Breast epithelium (tissue), 4 donors: ENCODE measurements at regions of chr14 and their contacts with region 1.

Region 1: DNA sequence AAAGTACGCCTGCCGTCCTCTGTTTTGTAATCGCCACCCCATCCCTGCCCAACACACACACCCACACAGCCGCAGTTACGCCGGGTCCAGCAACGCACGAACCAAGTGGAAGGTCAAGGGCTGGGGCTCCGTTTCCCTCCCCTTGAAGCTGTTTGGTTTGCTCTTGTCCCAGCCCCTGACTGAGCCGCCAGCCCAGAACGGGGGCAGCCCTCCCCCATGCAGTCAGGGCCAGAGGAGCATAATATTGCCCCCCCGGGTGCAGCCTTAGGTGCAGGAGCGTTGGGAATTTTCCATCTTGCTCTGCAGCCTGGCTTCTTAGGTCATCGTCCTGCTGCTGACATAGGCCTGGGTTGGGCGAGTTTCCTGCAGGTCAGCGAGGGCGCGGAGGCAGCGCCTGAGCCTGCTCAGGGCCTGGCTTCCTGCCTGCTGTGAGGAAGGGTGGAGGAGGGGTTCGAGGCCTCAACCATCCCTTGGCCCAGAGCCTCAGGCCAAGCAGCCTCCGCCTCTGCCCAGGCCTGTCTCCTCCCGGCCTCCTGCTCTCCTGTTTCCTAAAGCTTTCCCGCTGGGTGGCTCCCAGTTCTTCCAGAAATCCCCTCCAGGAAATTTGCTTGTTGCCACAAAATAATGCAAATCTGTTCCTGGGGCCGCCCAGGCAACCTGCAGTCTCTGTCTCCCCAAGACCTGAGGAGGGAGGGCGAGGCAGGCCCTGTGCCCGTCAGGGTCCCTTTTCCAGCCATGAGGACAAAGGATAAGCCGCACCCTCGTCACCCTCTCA is 44.5 kb downstream of the PSMA6 start:
- DNase-seq: peak; percentile 89 to 91
- H3K4me3 ChIP-seq: peak overlapping the region in 2 of 3 donors; percentile 25 to 30
- H3K27ac ChIP-seq: peak overlapping the region; percentile 87 to 89
- H3K4me1 ChIP-seq: peaks cover 17 to 43% of the 10 kb centered on the region in 2 donors
- H3K27me3 ChIP-seq: no peaks in the 10 kb centered on the region
- CTCF ChIP-seq: no peak
- POLR2A ChIP-seq: no peak

Region 2: DNA sequence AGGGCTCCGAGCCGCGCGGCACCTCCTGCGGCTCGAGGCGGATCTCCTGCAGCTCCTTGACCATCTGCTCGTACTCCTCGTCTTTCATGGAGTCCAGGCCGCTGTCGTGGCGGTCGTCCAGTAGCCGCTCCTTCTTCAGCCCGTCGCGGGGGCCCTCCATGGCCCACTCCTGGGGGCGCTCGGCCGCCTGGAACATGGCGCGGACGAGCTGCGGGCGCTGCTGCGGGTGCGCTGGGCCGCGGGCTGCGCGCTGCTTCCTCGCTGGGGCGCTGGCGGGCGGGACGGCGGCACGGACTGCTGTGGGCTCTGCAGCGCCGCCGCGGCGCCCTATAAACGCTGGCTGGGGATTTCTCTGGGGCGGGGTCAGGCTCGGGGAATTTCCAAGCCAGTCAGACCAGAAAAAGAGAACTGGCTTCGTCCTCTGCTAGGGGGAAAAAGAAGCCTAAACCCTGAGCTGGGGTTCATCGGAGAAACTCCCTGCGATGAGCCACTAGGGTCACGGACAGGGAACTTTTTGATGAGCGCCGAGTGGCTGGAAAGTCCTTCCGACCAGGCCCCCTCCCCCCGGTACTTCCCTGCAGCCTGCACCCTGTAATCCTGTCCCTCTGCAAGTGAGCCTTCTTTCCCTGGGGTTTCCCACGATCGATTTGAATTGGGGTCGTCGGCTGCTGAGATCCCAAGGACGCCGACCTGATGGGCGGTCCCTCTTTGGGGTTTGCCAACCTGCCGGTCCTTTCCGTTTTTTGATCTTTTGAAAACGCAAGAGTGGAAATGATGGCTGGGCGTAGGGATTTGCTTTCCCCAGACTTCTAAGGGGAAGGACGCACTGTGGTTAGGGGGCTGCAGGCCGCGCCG is 68.0 kb after region 1 on chr14 and contains the start of gene NFKBIA:
- intact Hi-C with region 1: loop called (anchors 5 kb)
- DNase-seq: peak; percentile 83 to 93
- H3K4me3 ChIP-seq: peak within 1 kb of the TSS; percentile 69 to 99 (median 84)
- H3K27ac ChIP-seq: peak within 1 kb of the TSS; percentile 97 to 99
- H3K4me1 ChIP-seq: peaks cover 0 to 14% of the 10 kb centered on the region in 2 donors
- H3K27me3 ChIP-seq: no peaks in the 10 kb centered on the region
- CTCF ChIP-seq: peak in 2 of 3 donors; percentile 11 to 12
- POLR2A ChIP-seq: peak; percentile 42
- total RNA-seq, gene NFKBIA: 418 to 546 (median 422) TPM